OCI-LY7 (cell line): ENCODE measurements at regions of chr6 and their contacts with region 1.

Region 1: GRCh38 chr6:166402582-166403277 is 20.0 kb upstream of the MPC1 start:
- DNase-seq: no peak
- H3K4me3 ChIP-seq: no peak overlapping the region
- H3K27ac ChIP-seq: no peak overlapping the region
- H3K4me1 ChIP-seq: peaks cover 4% of the 10 kb centered on the region
- CTCF ChIP-seq: no peak

Region 2: GRCh38 chr6:165884813-165885765 is 517.6 kb before region 1 on chr6:
- CTCF ChIA-PET with region 1: no interaction called
- POLR2A ChIA-PET with region 1: no interaction called
- intact Hi-C with region 1: loop called (anchors 2 kb)
- DNase-seq: peak; percentile 72
- H3K4me3 ChIP-seq: no peak overlapping the region
- H3K27ac ChIP-seq: no peak overlapping the region
- H3K4me1 ChIP-seq: no peaks in the 10 kb centered on the region
- CTCF ChIP-seq: peak; percentile 93

Region 3: GRCh38 chr6:166156942-166157341 is 245.8 kb before region 1 on chr6:
- CTCF ChIA-PET with region 1: no interaction called
- POLR2A ChIA-PET with region 1: no interaction called
- intact Hi-C with region 1: loop called (anchors 5 kb)
- DNase-seq: no peak
- H3K4me3 ChIP-seq: no peak overlapping the region
- H3K27ac ChIP-seq: no peak overlapping the region
- H3K4me1 ChIP-seq: peaks cover 17% of the 10 kb centered on the region
- CTCF ChIP-seq: peak; percentile 74

Region 4: DNA sequence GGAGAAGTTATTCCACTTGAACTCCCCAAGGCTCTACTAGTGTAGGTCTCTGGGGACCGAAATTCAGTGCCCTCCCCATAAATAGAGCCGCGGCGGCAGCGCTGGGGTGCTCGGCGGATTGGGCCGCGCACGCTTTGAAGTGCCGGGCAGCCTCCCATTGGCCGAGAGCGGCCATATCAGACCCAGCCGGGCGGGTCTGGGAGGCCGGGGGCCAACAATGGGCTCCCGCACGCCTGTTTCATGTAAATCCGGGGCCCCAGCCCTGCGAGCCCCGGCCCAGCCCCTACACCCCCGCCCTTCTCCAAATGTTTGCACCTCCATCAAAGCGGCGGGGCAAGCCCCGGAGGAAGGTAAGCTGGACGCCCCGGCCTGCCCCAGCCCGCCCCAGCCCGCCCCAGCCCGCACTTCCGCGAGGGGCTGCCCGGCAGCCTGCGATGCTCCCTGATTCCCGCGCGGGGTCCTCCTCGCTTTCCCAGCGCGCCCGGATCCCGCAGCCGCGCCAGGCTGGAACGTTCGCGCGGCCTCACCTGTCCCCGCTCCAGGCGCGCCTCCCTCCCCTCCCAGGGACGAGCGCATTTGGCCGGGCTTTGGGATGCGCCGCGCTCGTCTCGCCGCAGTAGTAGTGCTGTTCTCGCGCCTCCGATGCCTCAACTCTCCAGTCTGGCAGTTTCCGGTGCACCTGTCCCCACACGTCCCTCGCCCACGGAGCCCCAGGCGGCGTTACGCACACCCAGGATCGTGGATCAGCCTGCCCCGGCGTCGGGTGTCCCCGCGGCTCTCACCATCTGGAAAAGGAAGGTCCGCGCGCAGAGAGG is 234.7 kb before region 1 on chr6 and contains the start of gene TBXT:
- CTCF ChIA-PET with region 1: interaction called, 11 read pairs
- POLR2A ChIA-PET with region 1: no interaction called
- intact Hi-C with region 1: no loop called
- DNase-seq: peak; percentile 64
- H3K4me3 ChIP-seq: peak within 1 kb of the TSS; percentile 72
- H3K27ac ChIP-seq: no peak within 1 kb of the TSS
- H3K4me1 ChIP-seq: peaks cover 20% of the 10 kb centered on the region
- CTCF ChIP-seq: 0 out of 2 replicates have a peak, but pooled peaks have one; percentile 22
- total RNA-seq, gene TBXT: 0.44 and 1.0 TPM in 2 replicates

Region 5: GRCh38 chr6:166313255-166314070 is 89.3 kb before region 1 on chr6:
- CTCF ChIA-PET with region 1: interaction called, 3 read pairs
- POLR2A ChIA-PET with region 1: interaction called, 7 read pairs
- intact Hi-C with region 1: loop called (anchors 1 kb)
- DNase-seq: peak; percentile 67
- H3K4me3 ChIP-seq: no peak overlapping the region
- H3K27ac ChIP-seq: no peak overlapping the region
- H3K4me1 ChIP-seq: peaks cover 9% of the 10 kb centered on the region
- CTCF ChIP-seq: peak; percentile 96

Region 6: DNA sequence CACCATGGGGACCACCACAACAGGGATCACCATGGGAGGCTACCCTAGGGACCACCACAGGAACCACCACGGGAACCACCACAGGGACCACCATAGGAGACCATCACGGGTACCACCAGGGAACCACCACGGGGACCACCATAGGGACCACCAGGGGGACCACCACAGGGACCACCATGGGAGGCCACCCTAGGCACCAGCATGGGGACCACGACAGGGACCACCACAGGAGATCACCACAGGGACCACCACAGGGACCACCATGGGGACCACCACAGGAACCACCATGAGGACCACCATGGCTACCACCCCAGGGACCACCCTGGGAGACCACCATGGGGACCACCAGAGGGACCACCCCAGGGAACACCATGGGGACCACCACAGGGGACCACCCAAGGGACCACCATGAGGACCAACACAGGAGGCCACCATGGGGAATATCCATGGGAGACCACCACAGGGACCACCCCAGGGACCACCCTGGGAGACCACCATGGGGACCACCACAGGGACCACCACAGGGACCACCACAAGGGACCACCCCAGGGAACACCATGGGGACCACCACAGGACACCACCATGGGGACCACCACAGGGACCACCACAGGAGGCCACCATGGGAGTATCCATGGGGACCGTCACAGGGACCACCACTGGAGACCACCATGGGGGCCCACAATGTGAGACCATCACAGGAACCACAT is 47.6 kb after region 1 on chr6:
- CTCF ChIA-PET with region 1: no interaction called
- POLR2A ChIA-PET with region 1: no interaction called
- intact Hi-C with region 1: no loop called
- DNase-seq: no peak
- H3K4me3 ChIP-seq: no peak overlapping the region
- H3K27ac ChIP-seq: no peak overlapping the region
- H3K4me1 ChIP-seq: no peaks in the 10 kb centered on the region
- CTCF ChIP-seq: no peak